ENCODE measurements at regions of chr1 and their contacts with region 1.

Region 1: GRCh38 chr1:89762779-89763648 is 57.8 kb upstream of the LRRC8D start:
- DNase-seq: peak; percentile 92
- H3K4me3 Mint-ChIP-seq: peak overlapping the region; percentile 86
- H3K27ac Mint-ChIP-seq: peak overlapping the region; percentile 81
- H3K4me1 Mint-ChIP-seq: peaks cover 42% of the 10 kb centered on the region
- H3K27me3 Mint-ChIP-seq: no peaks in the 10 kb centered on the region

Region 2: DNA sequence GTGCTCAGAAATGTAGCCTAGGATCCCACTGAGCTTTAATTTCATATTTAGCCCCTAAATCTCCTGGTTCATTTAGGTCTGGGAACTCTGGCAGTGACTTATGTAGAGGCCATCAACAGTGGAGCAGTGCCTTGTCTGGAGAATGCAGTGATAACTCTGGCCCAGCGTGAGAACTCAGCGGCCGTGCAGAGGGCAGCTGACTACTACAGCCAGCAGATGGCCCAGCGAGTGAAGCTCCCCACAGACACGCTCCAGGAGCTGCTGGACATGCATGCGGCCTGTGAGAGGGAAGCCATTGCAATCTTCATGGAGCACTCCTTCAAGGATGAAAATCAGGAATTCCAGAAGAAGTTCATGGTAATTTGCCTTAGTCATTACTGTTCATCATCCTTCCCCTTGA is 381.4 kb before region 1 on chr1:
- CTCF ChIA-PET with region 1: no interaction called
- intact Hi-C with region 1: no loop called
- DNase-seq: no peak
- H3K4me3 Mint-ChIP-seq: no peak overlapping the region
- H3K27ac Mint-ChIP-seq: no peak overlapping the region
- H3K4me1 Mint-ChIP-seq: peaks cover 8% of the 10 kb centered on the region
- H3K27me3 Mint-ChIP-seq: no peaks in the 10 kb centered on the region

Region 3: DNA sequence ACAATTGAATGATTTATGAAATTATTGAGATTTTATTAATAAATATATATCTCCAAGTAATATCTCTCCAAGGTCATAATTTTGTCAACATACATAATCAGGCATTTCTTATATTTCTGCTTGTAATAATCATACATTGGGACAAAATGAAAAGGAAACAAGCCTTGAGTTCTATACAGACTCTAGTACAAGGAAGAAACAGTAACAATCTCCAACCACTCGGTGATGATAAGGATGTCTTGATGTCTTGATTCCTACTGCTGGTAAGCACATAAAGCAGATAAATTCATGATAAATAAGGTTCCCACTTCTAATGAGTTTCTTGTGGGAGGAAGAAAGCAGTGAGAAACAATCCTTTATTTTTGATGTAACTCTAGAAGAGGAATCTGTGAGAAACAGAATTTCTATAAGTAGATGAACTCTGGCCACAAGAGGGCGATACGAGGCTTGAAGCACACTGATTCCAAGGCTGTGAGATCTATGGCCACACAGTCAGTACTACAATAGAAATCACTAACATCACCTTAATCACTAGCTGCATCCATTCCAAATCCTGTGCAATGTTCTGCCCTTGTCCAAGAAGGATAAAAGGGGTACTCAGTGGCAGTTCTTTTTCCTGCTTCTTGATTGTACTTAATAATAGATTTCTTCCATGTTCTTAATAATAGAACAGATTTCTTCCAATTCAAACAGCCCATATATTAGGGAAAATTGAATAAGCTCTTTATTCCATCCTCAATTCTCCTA is 279.8 kb before region 1 on chr1:
- CTCF ChIA-PET with region 1: interaction called, 53 read pairs
- intact Hi-C with region 1: loop called (anchors 1 kb)
- DNase-seq: peak; percentile 93
- H3K4me3 Mint-ChIP-seq: no peak overlapping the region
- H3K27ac Mint-ChIP-seq: no peak overlapping the region
- H3K4me1 Mint-ChIP-seq: peaks cover 12% of the 10 kb centered on the region
- H3K27me3 Mint-ChIP-seq: no peaks in the 10 kb centered on the region

Region 4: GRCh38 chr1:89615676-89616598 is 147.1 kb before region 1 on chr1:
- CTCF ChIA-PET with region 1: interaction called, 29 read pairs
- intact Hi-C with region 1: no loop called
- DNase-seq: no peak
- H3K4me3 Mint-ChIP-seq: no peak overlapping the region
- H3K27ac Mint-ChIP-seq: no peak overlapping the region
- H3K4me1 Mint-ChIP-seq: peaks cover 65% of the 10 kb centered on the region
- H3K27me3 Mint-ChIP-seq: no peaks in the 10 kb centered on the region

Region 5: GRCh38 chr1:89649783-89650182 is 113.2 kb before region 1 on chr1:
- CTCF ChIA-PET with region 1: interaction called, 12 read pairs
- intact Hi-C with region 1: no loop called
- DNase-seq: no peak
- H3K4me3 Mint-ChIP-seq: no peak overlapping the region
- H3K27ac Mint-ChIP-seq: peak overlapping the region; percentile 56
- H3K4me1 Mint-ChIP-seq: peaks cover 66% of the 10 kb centered on the region
- H3K27me3 Mint-ChIP-seq: no peaks in the 10 kb centered on the region

Region 6: GRCh38 chr1:89698624-89699023 is 64.4 kb before region 1 on chr1:
- CTCF ChIA-PET with region 1: interaction called, 16 read pairs
- intact Hi-C with region 1: loop called (anchors 2 kb)
- DNase-seq: no peak
- H3K4me3 Mint-ChIP-seq: no peak overlapping the region
- H3K27ac Mint-ChIP-seq: peak overlapping the region; percentile 88
- H3K4me1 Mint-ChIP-seq: peaks cover 83% of the 10 kb centered on the region
- H3K27me3 Mint-ChIP-seq: no peaks in the 10 kb centered on the region

Region 7: DNA sequence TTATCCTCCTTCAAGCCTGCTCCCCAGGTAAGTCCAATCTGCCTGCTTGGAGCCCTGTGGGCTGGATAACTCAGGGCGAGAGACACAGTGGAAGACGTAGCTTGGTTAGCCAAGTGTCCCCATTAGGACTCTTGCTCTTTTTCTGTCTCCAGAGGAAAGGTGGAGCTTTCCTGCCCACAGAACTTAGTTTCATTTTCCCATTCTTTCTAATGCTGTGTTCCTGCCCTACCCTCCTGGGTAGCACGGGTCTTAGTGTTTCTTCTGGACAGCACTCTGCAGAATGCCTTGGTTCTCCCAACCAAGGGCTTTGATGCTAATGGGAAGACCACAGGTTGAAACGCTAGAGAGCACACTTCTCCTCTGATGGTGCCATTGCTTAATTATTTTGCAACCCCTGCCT is 34.6 kb before region 1 on chr1:
- CTCF ChIA-PET with region 1: interaction called, 12 read pairs
- intact Hi-C with region 1: loop called (anchors 1 kb)
- DNase-seq: no peak
- H3K4me3 Mint-ChIP-seq: no peak overlapping the region
- H3K27ac Mint-ChIP-seq: no peak overlapping the region
- H3K4me1 Mint-ChIP-seq: peaks cover 77% of the 10 kb centered on the region
- H3K27me3 Mint-ChIP-seq: no peaks in the 10 kb centered on the region

Region 8: GRCh38 chr1:90045853-90046563 is 283.0 kb after region 1 on chr1:
- CTCF ChIA-PET with region 1: no interaction called
- intact Hi-C with region 1: no loop called
- DNase-seq: peak; percentile 55
- H3K4me3 Mint-ChIP-seq: no peak overlapping the region
- H3K27ac Mint-ChIP-seq: no peak overlapping the region
- H3K4me1 Mint-ChIP-seq: no peaks in the 10 kb centered on the region
- H3K27me3 Mint-ChIP-seq: no peaks in the 10 kb centered on the region